ENCODE measurements at regions of chrX and their contacts with region 1.

Region 1: DNA sequence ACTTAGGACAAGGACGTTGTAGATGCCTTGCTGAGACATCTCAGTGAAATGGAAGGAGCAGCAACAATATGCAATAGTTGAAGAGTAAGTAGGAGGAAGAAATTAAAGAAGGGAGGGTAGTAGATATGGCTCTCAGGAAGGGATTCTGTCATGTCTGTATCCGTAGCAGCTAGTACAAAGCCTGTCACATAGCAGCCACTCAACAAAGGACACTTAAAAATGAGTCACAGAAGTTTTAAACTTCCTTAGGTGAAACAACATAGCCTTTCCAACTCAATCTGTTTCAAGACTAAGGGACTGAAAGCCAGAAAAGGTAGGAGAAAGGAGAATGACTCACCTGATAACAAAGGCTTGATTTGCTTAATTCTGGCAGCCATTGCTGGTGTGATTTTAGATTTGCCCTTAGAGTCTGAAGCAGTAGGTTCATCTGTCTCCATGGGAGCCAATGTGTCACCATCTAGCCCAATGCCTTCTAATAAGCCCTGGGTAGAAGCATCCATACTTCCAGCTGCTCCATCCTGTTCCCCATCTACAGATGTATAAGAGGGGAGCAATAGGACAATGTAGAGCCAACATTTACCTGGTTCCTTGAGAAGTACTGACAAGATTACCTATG is 86.6 kb downstream of the HUWE1 start:
- DNase-seq: no peak
- H3K4me3 ChIP-seq: no peak overlapping the region
- H3K27ac ChIP-seq: no peak overlapping the region
- H3K4me1 ChIP-seq: peaks cover 11% of the 10 kb centered on the region
- H3K27me3 ChIP-seq: no peaks in the 10 kb centered on the region
- CTCF ChIP-seq: no peak

Region 2: GRCh38 chrX:52811065-52811625 is 788.7 kb before region 1 on chrX and contains the start of gene XAGE5:
- CTCF ChIA-PET with region 1: no interaction called
- POLR2A ChIA-PET with region 1: no interaction called
- intact Hi-C with region 1: no loop called
- DNase-seq: no peak
- H3K4me3 ChIP-seq: no peak within 1 kb of the TSS
- H3K27ac ChIP-seq: no peak within 1 kb of the TSS
- H3K4me1 ChIP-seq: no peaks in the 10 kb centered on the region
- H3K27me3 ChIP-seq: peaks cover 4% of the 10 kb centered on the region
- CTCF ChIP-seq: no peak
- total RNA-seq, gene XAGE5: not detected in 2 replicates

Region 3: DNA sequence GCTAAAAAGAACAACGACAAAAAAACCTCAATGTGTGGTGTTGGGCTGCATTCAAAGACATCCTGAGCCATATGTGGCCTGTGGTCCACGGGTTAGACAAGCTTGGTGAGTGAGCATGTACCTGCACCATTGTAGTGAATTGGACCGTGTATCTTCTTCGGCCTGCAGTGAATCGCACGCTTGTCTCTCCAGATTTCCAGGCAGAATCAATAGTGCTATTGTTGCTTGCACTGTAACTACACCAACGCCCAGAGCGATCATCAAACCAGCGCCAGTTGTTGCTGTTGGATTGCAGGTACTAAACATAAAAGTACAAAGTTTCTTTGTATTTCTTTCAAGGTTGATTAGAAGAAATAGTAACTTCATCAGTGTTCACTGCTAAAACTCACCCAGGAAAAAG is 15.0 kb before region 1 on chrX:
- CTCF ChIA-PET with region 1: no interaction called
- POLR2A ChIA-PET with region 1: interaction called, 3 read pairs
- intact Hi-C with region 1: loop called (anchors 1 kb)
- DNase-seq: no peak
- H3K4me3 ChIP-seq: no peak overlapping the region
- H3K27ac ChIP-seq: no peak overlapping the region
- H3K4me1 ChIP-seq: peaks cover 24% of the 10 kb centered on the region
- H3K27me3 ChIP-seq: no peaks in the 10 kb centered on the region
- CTCF ChIP-seq: no peak

Region 4: DNA sequence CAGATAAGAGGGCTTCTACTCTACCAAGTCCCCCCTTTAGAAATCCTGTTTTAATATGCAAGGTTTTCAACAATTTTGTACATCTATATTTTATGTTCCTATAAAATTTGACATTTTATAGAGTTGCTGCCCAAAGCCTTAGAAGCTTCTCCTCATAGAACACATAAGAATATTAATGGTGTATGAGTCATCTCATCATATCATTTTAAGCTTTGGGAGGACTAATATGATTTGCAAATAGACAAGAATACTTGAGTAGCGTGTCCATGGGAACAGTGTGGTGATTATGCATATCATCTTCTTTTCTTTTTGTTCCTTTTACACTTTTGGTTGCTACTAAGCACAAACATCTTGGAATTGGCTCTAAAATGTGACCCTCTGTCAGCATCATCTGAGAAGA is 143.4 kb after region 1 on chrX:
- CTCF ChIA-PET with region 1: no interaction called
- POLR2A ChIA-PET with region 1: no interaction called
- intact Hi-C with region 1: no loop called
- DNase-seq: peak; percentile 13
- H3K4me3 ChIP-seq: no peak overlapping the region
- H3K27ac ChIP-seq: no peak overlapping the region
- H3K4me1 ChIP-seq: no peaks in the 10 kb centered on the region
- H3K27me3 ChIP-seq: no peaks in the 10 kb centered on the region
- CTCF ChIP-seq: no peak

Measured in A673 (cell line).